ENCODE measurements at regions of chr9 and their contacts with region 1.

Region 1: DNA sequence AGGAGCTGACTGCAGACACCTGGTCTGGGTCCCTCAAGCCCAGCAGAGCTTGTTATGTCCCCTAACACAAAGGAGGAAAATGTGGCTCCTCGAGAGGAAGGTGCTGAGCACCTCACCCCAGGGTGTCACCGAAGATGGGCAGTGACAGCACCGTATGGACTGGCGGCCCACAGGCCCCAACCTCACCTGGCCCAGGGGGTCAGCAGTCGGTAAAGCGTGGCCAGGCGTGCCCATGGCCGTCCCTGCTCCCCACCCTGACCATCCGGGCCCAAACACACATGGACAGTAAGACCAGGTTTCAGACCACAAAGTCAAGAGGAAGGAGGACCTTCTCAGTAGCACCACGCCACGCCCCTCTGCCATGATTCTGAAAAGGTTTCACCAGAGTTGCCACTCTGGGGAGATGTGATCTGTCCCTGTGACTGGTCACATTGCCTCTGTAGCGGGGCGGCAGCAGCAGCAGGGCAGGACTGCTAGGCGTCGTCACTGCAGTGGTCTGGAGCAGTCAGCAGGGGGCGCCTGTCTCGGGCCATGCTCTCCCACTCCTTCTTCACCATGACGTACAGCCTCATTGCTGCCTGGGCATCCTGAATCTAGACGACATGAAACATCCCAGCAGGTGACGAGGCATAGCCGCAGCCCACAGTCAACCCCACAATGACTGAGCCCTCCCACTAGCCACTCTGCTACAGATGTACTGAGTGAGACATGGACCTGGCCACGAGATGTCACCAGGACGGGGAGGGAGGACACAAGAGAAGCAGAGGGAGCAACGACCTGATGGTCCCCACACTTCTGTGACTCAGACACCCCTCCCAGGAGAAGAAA is 11.1 kb downstream of the REXO4 start:
- DNase-seq: peak; percentile 52
- ATAC-seq: peak; percentile 87
- H3K4me3 ChIP-seq: no peak overlapping the region
- H3K27ac ChIP-seq: no peak overlapping the region
- H3K4me1 ChIP-seq: peaks cover 8% of the 10 kb centered on the region
- H3K27me3 ChIP-seq: no peaks in the 10 kb centered on the region
- CTCF ChIP-seq: peak; percentile 96
- EP300 ChIP-seq: no peak
- POLR2A ChIP-seq: 0 out of 4 replicates have a peak, but pooled peaks of 1 of the 2 experiments have one; percentile 4
- RAD21 ChIP-seq: peak; percentile 91

Region 2: DNA sequence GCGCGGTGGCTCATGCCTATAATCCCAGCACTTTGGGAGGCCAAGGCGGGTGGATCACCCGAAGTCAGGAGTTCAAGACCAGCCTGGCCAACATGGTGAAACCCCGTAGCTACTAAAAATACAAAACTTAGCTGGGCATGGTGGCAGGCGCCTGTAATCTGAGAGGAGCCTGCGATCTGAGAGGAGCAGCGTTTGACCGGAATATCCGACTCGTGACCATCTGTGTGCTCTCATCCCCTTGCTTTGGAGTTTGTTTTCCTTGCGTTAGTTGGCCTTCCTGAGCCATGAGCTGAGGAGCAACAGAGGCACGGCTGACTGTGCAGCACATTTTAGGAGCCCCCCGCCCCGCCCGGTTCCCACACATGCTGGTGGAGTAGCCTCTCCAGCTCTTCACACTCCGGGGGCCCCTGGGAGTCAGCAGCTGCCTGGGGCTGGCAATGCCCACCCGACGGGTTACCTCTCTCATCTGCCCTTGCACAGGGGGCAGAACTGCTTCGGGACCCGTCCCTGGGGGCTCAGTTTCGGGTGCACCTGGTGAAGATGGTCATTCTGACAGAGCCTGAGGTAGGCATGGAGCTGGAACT is 18.4 kb after region 1 on chr9:
- CTCF ChIA-PET with region 1: interaction called, 4 read pairs
- POLR2A ChIA-PET with region 1: no interaction called
- in situ Hi-C with region 1: no loop called
- intact Hi-C with region 1: loop called (anchors 2 kb)
- DNase-seq: no peak
- ATAC-seq: no peak
- H3K4me3 ChIP-seq: no peak overlapping the region
- H3K27ac ChIP-seq: no peak overlapping the region
- H3K4me1 ChIP-seq: peaks cover 66% of the 10 kb centered on the region
- H3K27me3 ChIP-seq: no peaks in the 10 kb centered on the region; a peak in 1 of 5 replicates
- CTCF ChIP-seq: no peak
- EP300 ChIP-seq: no peak
- POLR2A ChIP-seq: no peak
- RAD21 ChIP-seq: no peak

Region 3: DNA sequence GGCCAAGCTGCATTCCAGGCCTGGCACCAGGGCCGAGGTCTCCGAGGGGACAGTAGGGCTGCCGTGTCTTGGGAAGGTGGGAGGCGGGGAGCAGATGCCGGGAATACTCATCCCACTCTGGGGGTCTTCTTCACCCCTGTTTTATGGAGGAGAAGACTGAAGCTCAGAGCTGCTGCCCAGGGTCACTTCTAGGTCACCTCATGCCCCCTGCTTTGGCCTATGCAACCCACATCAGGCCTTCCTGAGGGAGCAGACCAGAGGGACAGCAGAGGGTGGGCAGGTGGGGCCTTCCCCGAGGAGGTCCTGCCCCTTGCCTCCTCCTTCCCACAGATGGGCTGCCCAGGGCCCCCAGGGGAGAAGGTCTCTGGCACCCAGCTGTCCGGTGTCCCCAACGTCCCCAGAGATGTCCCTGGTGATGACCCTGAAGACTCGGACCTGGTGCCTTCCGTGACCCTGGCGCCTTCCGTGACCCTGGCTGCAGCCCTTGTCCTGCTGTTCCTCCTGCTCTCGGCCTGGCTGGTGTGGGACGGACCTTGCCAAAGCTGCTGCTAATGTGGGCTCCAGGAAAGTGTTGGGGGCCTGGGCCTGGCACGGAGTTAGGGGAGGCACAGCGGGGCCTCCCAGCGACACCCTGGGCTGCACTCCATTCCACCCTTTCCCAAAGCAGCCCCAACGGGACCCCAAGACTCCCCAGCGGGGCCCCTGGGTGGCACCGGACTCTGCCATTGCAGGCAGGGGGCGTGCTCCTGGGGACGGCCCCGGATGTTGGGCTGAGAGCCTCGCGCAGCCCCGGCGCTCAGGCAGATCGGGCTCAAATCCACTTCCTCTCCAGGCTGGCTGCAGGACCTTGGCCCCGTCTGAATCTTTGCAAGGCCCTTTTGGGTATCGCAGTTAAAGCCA is 78.9 kb after region 1 on chr9:
- CTCF ChIA-PET with region 1: interaction called, 39 read pairs
- POLR2A ChIA-PET with region 1: interaction called, 3 read pairs
- in situ Hi-C with region 1: loop called (anchors 5 kb)
- intact Hi-C with region 1: loop called (anchors 1 kb)
- DNase-seq: no peak
- ATAC-seq: peak; percentile 67
- H3K4me3 ChIP-seq: peak overlapping the region; percentile 27 to 70 (median 47); a peak in 4 of 6 replicates
- H3K27ac ChIP-seq: no peak overlapping the region
- H3K4me1 ChIP-seq: peaks cover 54% of the 10 kb centered on the region
- H3K27me3 ChIP-seq: peaks cover 4 to 54% of the 10 kb centered on the region in 2 experiments
- CTCF ChIP-seq: no peak
- EP300 ChIP-seq: no peak
- POLR2A ChIP-seq: no peak
- RAD21 ChIP-seq: no peak

Measured in HepG2 (cell line).